Mammary epithelial cell (primary cell): ENCODE measurements at regions of chr13 and their contacts with region 1.

Region 1: GRCh38 chr13:30257468-30258099 is 49.8 kb downstream of the KATNAL1 start:
- DNase-seq: no peak
- H3K4me3 ChIP-seq: no peak overlapping the region
- H3K27ac ChIP-seq: no peak overlapping the region
- H3K4me1 ChIP-seq: no peaks in the 10 kb centered on the region
- H3K27me3 ChIP-seq: no peaks in the 10 kb centered on the region
- CTCF ChIP-seq: no peak

Region 2: GRCh38 chr13:30551189-30551588 is 293.6 kb after region 1 on chr13:
- CTCF ChIA-PET with region 1: no interaction called
- dilution Hi-C with region 1: no loop called
- in situ Hi-C with region 1: no loop called
- intact Hi-C with region 1: loop called (anchors 1 kb)
- DNase-seq: peak; percentile 24
- H3K4me3 ChIP-seq: no peak overlapping the region
- H3K27ac ChIP-seq: no peak overlapping the region
- H3K4me1 ChIP-seq: no peaks in the 10 kb centered on the region
- H3K27me3 ChIP-seq: no peaks in the 10 kb centered on the region
- CTCF ChIP-seq: peak; percentile 28 to 56